Activated T-helper 1 cell treated with anti-CD3 and anti-CD28 coated beads, Interleukin-12 subunit alpha, Interleukin-12 subunit beta, Interleukin-2, Interleukin-4 antibody, amounts not matched to agents 30 ng/mL and 10 ng/mL and 1 ng/mL, durations not matched to agents 14 hours and 24 hours and 36 hours (primary cell): ENCODE measurements at regions of chr1 and their contacts with region 1.

Region 1: GRCh38 chr1:80410233-80410632 is 1390.5 kb upstream of the ADGRL2 start:
- DNase-seq: no peak
- H3K4me3 Mint-ChIP-seq: no peak overlapping the region
- H3K27ac Mint-ChIP-seq: no peak overlapping the region
- H3K4me1 Mint-ChIP-seq: no peaks in the 10 kb centered on the region
- H3K27me3 Mint-ChIP-seq: no peaks in the 10 kb centered on the region

Region 2: DNA sequence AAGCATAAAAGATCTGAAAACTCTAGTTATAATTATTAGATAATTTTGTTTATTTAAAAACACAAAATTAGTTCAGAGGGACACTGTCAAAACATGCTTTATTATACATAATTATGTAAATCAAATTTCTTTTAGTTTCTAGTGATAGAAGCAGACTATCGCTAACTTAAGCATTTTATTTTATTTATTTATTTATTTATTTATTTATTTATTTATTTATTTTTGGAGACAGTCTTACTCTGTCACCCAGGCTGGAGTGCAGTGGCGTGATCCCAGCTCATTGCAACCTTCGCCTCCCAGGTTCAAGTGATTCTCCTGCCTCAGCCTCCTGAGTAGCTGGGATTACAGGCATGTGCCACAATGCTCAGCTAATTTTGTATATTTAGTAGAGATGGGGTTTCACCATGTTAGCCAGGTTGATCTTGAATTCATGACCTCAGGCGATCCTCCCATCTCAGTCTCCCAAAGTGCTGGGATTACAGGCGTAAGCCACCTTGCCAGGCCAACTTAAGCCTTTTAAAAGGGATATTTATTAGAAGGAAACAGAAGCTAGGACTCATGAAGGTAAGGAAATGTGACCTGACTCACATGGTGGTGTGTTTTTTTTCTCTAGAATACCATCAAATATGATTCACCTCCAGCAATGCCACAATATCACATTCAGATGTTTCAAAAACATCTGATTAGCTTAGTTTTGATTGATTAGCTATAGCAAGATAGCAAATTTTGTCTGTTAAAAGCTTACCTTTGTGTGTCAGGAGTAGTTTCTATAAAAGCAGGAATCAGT is 46.4 kb before region 1 on chr1:
- intact Hi-C with region 1: loop called (anchors 2 kb)
- DNase-seq: no peak
- H3K4me3 Mint-ChIP-seq: no peak overlapping the region
- H3K27ac Mint-ChIP-seq: no peak overlapping the region
- H3K4me1 Mint-ChIP-seq: no peaks in the 10 kb centered on the region
- H3K27me3 Mint-ChIP-seq: no peaks in the 10 kb centered on the region

Region 3: GRCh38 chr1:80427881-80428280 is 17.6 kb after region 1 on chr1:
- intact Hi-C with region 1: no loop called
- DNase-seq: no peak
- H3K4me3 Mint-ChIP-seq: no peak overlapping the region
- H3K27ac Mint-ChIP-seq: no peak overlapping the region
- H3K4me1 Mint-ChIP-seq: no peaks in the 10 kb centered on the region
- H3K27me3 Mint-ChIP-seq: no peaks in the 10 kb centered on the region